Dorsolateral prefrontal cortex (tissue), 120 donors: ENCODE measurements at regions of chr2 and their contacts with region 1.

Region 1: DNA sequence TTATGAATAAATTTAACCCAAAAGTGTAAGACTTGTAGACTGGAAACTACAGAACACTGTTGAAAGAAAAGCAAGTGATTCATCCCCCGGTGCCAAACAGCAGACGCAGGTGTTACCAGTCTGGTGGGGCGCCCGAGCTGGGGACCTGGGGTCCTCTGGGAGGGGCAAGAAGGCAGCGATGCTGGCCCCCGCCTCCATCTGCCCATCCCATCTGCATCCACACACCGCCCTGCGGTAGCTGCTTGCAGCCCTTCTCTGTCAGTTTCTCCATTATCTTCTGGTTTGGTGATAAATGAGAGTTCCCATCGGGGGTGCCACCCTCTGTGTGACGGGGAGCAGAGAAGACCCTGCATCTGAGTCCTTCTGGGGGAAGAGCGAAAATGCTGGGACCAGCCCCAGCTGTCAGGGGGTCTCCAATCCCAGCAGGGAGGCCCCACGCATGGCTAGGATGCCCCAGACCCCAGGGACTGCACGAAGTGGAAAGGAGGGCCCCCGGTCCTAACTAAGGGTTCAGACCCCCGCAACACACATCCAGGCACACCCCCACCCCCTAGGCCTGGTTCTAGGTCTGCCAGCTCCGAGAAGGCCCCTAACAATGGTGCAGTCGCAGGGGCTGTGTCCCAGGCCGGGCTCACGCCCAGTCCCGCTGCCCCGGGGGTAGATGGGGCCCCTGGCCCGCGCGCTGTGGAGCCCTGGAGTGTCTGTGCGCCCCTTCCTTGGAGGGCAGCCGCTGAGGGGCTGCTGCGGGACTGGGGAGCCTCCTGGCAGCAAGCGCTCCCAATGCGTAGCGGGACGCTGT is 686 bp upstream of the RGPD8 start:
- DNase-seq: no peak
- H3K4me3 ChIP-seq: peak overlapping the region in 34 of 59 donors; percentile 25 to 79 (median 64)
- H3K27ac ChIP-seq: peak overlapping the region in 7 of 59 donors; percentile 20 to 84 (median 48)
- H3K27me3 ChIP-seq: no peaks in the 10 kb centered on the region
- CTCF ChIP-seq: no peak

Region 2: GRCh38 chr2:112121682-112122254 is 312.4 kb before region 1 on chr2:
- intact Hi-C with region 1: loop called in 1 of 2 experiments (anchors 5 kb)
- DNase-seq: no peak
- H3K4me3 ChIP-seq: no peak overlapping the region
- H3K27ac ChIP-seq: no peak overlapping the region
- H3K27me3 ChIP-seq: no peaks in the 10 kb centered on the region
- CTCF ChIP-seq: peak; percentile 48 to 82 (median 70)

Region 3: GRCh38 chr2:112275306-112275886 is 158.7 kb before region 1 on chr2 and contains the start of gene ZC3H6:
- intact Hi-C with region 1: loop called in 1 of 2 experiments (anchors 5 kb)
- DNase-seq: peak; percentile 97 to 100 (median 99)
- H3K4me3 ChIP-seq: peak within 1 kb of the TSS; percentile 68 to 99 (median 90)
- H3K27ac ChIP-seq: peak within 1 kb of the TSS; percentile 98 to 100 (median 100)
- H3K27me3 ChIP-seq: no peaks in the 10 kb centered on the region
- CTCF ChIP-seq: peak in 49 of 56 donors; percentile 9 to 68 (median 42)
- total RNA-seq, gene ZC3H6: 20.4 to 50.4 (median 36.4) TPM

Region 4: GRCh38 chr2:112465382-112465781 is 31.3 kb after region 1 on chr2:
- intact Hi-C with region 1: no loop called
- DNase-seq: no peak
- H3K4me3 ChIP-seq: no peak overlapping the region
- H3K27ac ChIP-seq: no peak overlapping the region
- H3K27me3 ChIP-seq: peaks cover 0 to 3% (median 0%) of the 10 kb centered on the region in 45 donors
- CTCF ChIP-seq: no peak